Naive thymus-derived CD4-positive, alpha-beta T cell (primary cell): ENCODE measurements at regions of chr15 and their contacts with region 1.

Region 1: GRCh38 chr15:74842581-74843444 is at the start of gene ULK3:
- DNase-seq: peak; percentile 89 to 97 (median 93)
- ATAC-seq: peak; percentile 97
- H3K4me3 ChIP-seq: peak within 1 kb of the TSS; percentile 74
- H3K4me3 Mint-ChIP-seq: peak within 1 kb of the TSS; percentile 80 to 95 (median 90)
- H3K27ac ChIP-seq: peak within 1 kb of the TSS; percentile 79
- H3K27ac Mint-ChIP-seq: peak within 1 kb of the TSS; percentile 88 to 95 (median 94)
- H3K4me1 ChIP-seq: peaks cover 40 to 50% of the 10 kb centered on the region in 2 donors
- H3K4me1 Mint-ChIP-seq: peaks cover 26 to 62% (median 50%) of the 10 kb centered on the region in 7 donors
- H3K27me3 ChIP-seq: no peaks in the 10 kb centered on the region
- H3K27me3 Mint-ChIP-seq: no peaks in the 10 kb centered on the region
- total RNA-seq, gene ULK3: 53.2 to 106 (median 59.2) TPM

Region 2: DNA sequence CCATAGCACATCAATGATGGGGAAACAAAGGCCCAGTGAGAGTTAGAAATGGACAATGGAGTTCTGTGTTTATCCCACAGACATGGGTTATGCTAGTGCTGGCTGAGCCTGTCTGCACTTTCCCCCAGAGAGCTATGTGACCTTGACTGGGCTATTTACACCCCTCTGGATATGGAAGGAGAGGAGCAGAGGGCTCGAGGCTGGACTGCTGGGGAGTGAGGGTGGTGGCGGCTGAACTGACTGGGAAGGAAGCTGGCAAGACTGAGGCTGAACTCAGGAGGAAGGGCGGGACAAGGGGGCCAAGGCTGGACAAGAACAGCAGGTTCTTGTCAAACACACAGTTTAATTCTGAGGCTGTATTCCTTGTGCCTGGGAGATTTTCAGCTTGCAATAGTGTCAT is 1078.9 kb before region 1 on chr15:
- CTCF ChIA-PET with region 1: no interaction called
- POLR2A ChIA-PET with region 1: no interaction called
- intact Hi-C with region 1: no loop called
- DNase-seq: no peak
- ATAC-seq: no peak
- H3K4me3 ChIP-seq: no peak overlapping the region
- H3K4me3 Mint-ChIP-seq: no peak overlapping the region
- H3K27ac ChIP-seq: no peak overlapping the region
- H3K27ac Mint-ChIP-seq: no peak overlapping the region
- H3K4me1 ChIP-seq: no peaks in the 10 kb centered on the region
- H3K4me1 Mint-ChIP-seq: no peaks in the 10 kb centered on the region
- H3K27me3 ChIP-seq: no peaks in the 10 kb centered on the region
- H3K27me3 Mint-ChIP-seq: peaks cover 9 to 19% (median 11%) of the 10 kb centered on the region in 5 donors

Region 3: GRCh38 chr15:74781431-74782258 is 61.2 kb before region 1 on chr15 and contains the start of gene CSK:
- CTCF ChIA-PET with region 1: interaction called, 5 read pairs
- POLR2A ChIA-PET with region 1: interaction called, 8 read pairs
- intact Hi-C with region 1: loop called in 1 of 2 experiments (anchors 2 kb)
- DNase-seq: peak; percentile 68 to 90 (median 85)
- ATAC-seq: peak; percentile 80
- H3K4me3 ChIP-seq: peak within 1 kb of the TSS; percentile 91
- H3K4me3 Mint-ChIP-seq: peak within 1 kb of the TSS; percentile 87 to 99 (median 96)
- H3K27ac ChIP-seq: peak within 1 kb of the TSS; percentile 92
- H3K27ac Mint-ChIP-seq: peak within 1 kb of the TSS; percentile 90 to 100 (median 98)
- H3K4me1 ChIP-seq: peaks cover 62% of the 10 kb centered on the region in 2 donors
- H3K4me1 Mint-ChIP-seq: peaks cover 64 to 73% (median 70%) of the 10 kb centered on the region in 7 donors
- H3K27me3 ChIP-seq: no peaks in the 10 kb centered on the region
- H3K27me3 Mint-ChIP-seq: no peaks in the 10 kb centered on the region
- total RNA-seq, gene CSK: 163 to 421 (median 228) TPM

Region 4: DNA sequence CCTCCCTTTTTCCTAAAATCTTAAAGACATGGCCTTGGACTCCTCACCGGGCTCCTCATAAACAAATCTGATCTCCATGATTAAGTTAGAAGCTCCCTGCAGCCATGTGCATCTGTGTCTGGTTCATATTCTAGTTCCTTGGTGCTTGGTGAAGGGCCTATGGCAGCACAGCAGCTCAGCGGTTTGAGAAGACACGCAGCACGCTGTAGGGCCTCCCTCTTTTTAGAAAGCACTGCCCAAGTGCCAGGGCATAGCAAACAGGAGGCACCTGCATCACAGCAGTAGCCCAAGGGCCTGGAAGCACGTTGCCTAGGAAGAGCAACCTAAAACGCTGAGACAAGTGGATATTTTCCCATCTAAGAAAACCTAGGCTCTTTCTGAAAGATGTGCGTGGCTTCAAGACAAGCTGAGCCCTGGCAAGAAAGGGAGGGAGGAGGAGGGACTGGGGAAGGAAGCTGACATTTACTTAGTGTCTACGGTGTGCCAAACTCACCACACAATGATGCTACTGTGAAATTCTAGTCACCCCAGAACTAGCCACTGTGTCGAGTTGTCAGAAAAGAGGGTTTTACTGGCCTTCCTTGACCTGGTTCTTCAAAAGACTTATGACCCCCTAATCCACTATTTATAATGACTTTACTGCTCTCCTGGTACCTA is 15.0 kb after region 1 on chr15:
- CTCF ChIA-PET with region 1: interaction called, 6 read pairs
- POLR2A ChIA-PET with region 1: interaction called, 9 read pairs
- intact Hi-C with region 1: loop called in 1 of 2 experiments (anchors 2 kb)
- DNase-seq: no peak
- ATAC-seq: peak; percentile 56
- H3K4me3 ChIP-seq: no peak overlapping the region
- H3K4me3 Mint-ChIP-seq: peak overlapping the region in 5 of 10 donors; percentile 9 to 59 (median 41)
- H3K27ac ChIP-seq: peak overlapping the region; percentile 10
- H3K27ac Mint-ChIP-seq: peak overlapping the region in 8 of 9 donors; percentile 30 to 83 (median 76)
- H3K4me1 ChIP-seq: peaks cover 23 to 34% of the 10 kb centered on the region in 2 donors
- H3K4me1 Mint-ChIP-seq: peaks cover 19 to 45% (median 33%) of the 10 kb centered on the region in 7 donors
- H3K27me3 ChIP-seq: no peaks in the 10 kb centered on the region
- H3K27me3 Mint-ChIP-seq: no peaks in the 10 kb centered on the region

Region 5: DNA sequence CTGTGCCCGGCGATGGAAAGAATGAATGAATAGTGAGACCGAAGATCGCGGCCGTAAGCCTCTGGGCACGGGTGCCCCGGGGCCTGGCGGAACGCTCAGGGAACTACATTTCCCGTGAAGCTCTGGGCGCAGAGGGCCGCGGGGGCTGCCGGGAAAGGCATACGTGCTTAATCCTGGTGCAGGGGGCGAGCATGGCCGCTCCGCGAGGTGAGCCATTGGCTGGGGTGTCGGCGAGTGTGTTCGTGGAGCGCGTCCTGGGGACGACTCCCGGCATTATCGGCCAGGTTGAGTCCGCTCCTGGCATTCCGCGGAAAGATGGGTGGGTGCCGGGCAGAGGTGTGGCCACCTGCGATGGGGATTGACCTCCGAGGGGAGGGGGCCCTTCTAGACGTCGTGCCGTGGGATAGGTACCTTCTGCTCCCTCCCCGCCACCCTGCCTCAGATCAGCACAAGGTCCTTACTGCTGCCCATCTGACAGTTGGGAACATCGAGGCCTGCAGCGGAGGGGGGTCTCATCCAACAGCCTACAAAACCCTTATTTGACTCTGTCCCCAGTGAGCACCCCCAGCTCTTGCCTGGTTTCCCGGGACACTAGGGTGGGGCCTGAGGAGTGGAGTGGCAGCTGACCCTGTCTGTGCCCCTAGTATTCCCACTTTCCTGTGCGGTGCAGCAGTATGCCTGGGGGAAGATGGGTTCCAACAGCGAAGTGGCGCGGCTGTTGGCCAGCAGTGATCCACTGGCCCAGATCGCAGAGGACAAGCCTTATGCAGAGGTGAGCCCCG is 47.3 kb after region 1 on chr15 and contains the start of gene MPI:
- CTCF ChIA-PET with region 1: interaction called, 7 read pairs
- POLR2A ChIA-PET with region 1: interaction called, 21 read pairs
- intact Hi-C with region 1: loop called (anchors 1 kb)
- DNase-seq: peak; percentile 65 to 87 (median 79)
- ATAC-seq: peak; percentile 97
- H3K4me3 ChIP-seq: peak within 1 kb of the TSS; percentile 94
- H3K4me3 Mint-ChIP-seq: peak within 1 kb of the TSS; percentile 81 to 95 (median 90)
- H3K27ac ChIP-seq: peak within 1 kb of the TSS; percentile 84
- H3K27ac Mint-ChIP-seq: peak within 1 kb of the TSS; percentile 83 to 99 (median 94)
- H3K4me1 ChIP-seq: peaks cover 33 to 36% of the 10 kb centered on the region in 2 donors
- H3K4me1 Mint-ChIP-seq: peaks cover 30 to 59% (median 49%) of the 10 kb centered on the region in 7 donors
- H3K27me3 ChIP-seq: no peaks in the 10 kb centered on the region
- H3K27me3 Mint-ChIP-seq: no peaks in the 10 kb centered on the region
- total RNA-seq, gene MPI: 34.0 to 97.8 (median 80.6) TPM

Region 6: DNA sequence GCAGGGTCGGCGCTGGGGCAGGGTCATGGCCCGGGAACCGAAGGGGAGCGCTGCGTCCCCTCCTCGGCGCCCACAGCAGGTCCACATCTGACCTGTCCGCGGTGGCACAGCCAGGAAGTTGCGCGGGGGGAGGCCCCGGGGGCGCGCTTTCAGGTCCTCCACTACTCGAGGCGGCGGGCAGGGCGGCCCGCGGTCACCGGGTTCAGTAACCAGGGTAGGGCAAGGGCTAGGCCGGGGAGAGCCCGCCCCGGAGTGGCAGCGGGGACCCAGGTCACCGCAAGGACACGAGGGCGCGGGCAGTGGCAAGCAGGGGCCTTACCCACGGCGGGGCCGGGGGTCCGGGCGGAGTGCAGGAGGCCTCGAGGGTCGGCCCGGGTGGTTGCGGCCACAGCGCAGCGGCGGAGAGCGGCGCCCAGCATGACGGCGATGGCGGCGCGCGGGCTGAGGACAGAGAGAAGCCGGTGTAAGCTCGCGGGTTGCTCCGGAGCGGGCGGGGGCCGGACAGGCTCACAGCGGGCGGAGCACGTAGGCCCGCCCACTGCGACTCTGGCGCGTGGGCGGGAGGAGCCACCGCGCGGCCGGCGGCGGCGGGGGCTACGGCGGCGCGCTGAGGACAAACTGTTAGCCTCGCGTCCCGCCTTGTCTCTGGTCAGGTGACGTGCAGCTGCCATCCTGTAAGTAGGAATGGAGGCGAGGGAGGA is 94.9 kb after region 1 on chr15 and contains the start of gene COX5A:
- CTCF ChIA-PET with region 1: no interaction called
- POLR2A ChIA-PET with region 1: no interaction called
- intact Hi-C with region 1: loop called (anchors 1 kb)
- DNase-seq: peak; percentile 86 to 94 (median 92)
- ATAC-seq: peak; percentile 99
- H3K4me3 ChIP-seq: peak within 1 kb of the TSS; percentile 62
- H3K4me3 Mint-ChIP-seq: peak within 1 kb of the TSS; percentile 87 to 97 (median 94)
- H3K27ac ChIP-seq: peak within 1 kb of the TSS; percentile 85
- H3K27ac Mint-ChIP-seq: peak within 1 kb of the TSS; percentile 85 to 95 (median 91)
- H3K4me1 ChIP-seq: peaks cover 0 to 17% of the 10 kb centered on the region in 2 donors
- H3K4me1 Mint-ChIP-seq: peaks cover 16 to 38% (median 26%) of the 10 kb centered on the region in 7 donors
- H3K27me3 ChIP-seq: no peaks in the 10 kb centered on the region
- H3K27me3 Mint-ChIP-seq: peaks cover 0 to 3% (median 0%) of the 10 kb centered on the region in 5 donors
- total RNA-seq, gene COX5A: 44.4 to 210 (median 59.2) TPM

Region 7: DNA sequence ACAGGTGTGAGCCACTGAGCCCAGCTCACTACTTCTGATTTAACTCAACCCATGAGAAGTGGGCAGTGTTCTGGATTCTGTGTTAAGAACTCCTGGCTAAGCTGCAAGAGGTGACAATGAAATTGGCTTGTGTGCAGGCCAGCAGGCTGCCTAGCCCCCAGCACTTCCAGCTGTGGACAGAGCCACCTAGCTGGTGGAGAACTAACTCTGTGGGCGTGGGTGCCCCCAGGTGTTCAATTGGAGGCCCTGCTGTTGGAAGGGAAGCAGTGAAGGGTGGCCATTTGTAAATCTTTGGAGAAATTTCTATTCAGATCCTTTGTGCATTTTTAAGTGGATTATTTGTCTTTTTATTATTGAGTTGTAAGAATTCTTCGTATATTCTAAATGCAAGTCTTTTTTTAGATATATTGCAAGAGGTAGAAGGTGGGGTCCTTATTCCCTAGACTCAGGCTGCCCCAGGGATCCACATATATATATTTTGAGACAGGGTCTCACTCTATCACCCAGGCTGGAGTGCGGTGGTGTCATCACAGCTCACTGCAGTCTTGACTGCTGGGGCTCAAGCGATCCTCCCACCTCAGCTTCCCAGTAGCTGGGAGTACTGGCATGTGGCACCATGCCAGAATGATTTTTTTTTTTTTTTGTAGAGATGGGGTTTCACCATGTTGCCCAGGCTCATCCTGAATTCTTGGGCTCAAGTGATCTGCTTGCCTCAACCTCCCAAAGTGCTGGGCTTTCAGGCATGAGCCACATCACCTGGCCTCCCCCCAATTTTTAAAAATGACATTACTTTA is 145.4 kb after region 1 on chr15:
- CTCF ChIA-PET with region 1: no interaction called
- POLR2A ChIA-PET with region 1: no interaction called
- intact Hi-C with region 1: no loop called
- DNase-seq: peak in 6 of 9 donors; percentile 8 to 33 (median 18)
- ATAC-seq: peak; percentile 65
- H3K4me3 ChIP-seq: no peak overlapping the region
- H3K4me3 Mint-ChIP-seq: no peak overlapping the region
- H3K27ac ChIP-seq: no peak overlapping the region
- H3K27ac Mint-ChIP-seq: no peak overlapping the region
- H3K4me1 ChIP-seq: no peaks in the 10 kb centered on the region
- H3K4me1 Mint-ChIP-seq: peaks cover 0 to 6% (median 0%) of the 10 kb centered on the region in 7 donors
- H3K27me3 ChIP-seq: no peaks in the 10 kb centered on the region
- H3K27me3 Mint-ChIP-seq: peaks cover 0 to 23% (median 5%) of the 10 kb centered on the region in 5 donors